Activated CD4-positive, alpha-beta memory T cell treated with anti-CD3 and anti-CD28 coated beads, Interleukin-2, amount 10 ng/mL, durations not matched to agents 7 days and 5 days (primary cell): ENCODE measurements at regions of chr2 and their contacts with region 1.

Region 1: GRCh38 chr2:60581433-60582282 is 28.2 kb upstream of the BCL11A start:
- DNase-seq: peak; percentile 64
- H3K4me3 Mint-ChIP-seq: no peak overlapping the region
- H3K27ac Mint-ChIP-seq: no peak overlapping the region
- H3K4me1 Mint-ChIP-seq: peaks cover 2% of the 10 kb centered on the region
- H3K27me3 Mint-ChIP-seq: peaks cover 47% of the 10 kb centered on the region

Region 2: GRCh38 chr2:60560734-60561644 is 20.7 kb before region 1 on chr2:
- CTCF ChIA-PET with region 1: interaction called, 57 read pairs
- POLR2A ChIA-PET with region 1: no interaction called
- DNase-seq: no peak
- H3K4me3 Mint-ChIP-seq: no peak overlapping the region
- H3K27ac Mint-ChIP-seq: no peak overlapping the region
- H3K4me1 Mint-ChIP-seq: peaks cover 5% of the 10 kb centered on the region
- H3K27me3 Mint-ChIP-seq: peaks cover 74% of the 10 kb centered on the region

Region 3: DNA sequence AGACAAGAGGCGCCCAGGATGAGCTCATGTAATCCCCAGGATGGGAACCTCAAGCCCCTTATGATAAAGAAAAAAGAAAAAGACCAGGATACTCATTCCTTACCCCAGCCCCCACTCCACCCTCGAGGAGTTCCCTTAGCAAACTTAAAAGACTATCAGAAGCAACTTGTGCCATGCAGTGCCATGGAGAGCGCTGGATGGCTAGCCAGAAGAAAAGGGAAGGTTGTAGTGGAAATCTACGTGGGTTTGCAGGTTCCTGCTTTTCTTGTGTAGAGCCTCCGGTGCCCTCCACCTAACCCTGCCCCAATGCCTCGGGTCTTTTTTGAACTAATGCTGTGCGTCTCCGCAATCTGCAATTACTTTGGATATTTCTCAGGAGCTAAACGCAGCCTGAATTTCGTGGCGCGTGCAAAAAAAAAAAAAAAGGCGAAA is 12.0 kb before region 1 on chr2:
- CTCF ChIA-PET with region 1: interaction called, 28 read pairs
- POLR2A ChIA-PET with region 1: no interaction called
- DNase-seq: no peak
- H3K4me3 Mint-ChIP-seq: no peak overlapping the region
- H3K27ac Mint-ChIP-seq: no peak overlapping the region
- H3K4me1 Mint-ChIP-seq: peaks cover 3% of the 10 kb centered on the region
- H3K27me3 Mint-ChIP-seq: peaks cover 41% of the 10 kb centered on the region